Activated CD4-positive, alpha-beta T cell treated with anti-CD3 and anti-CD28 coated beads, Interleukin-2, amount 10 ng/mL, durations not matched to agents 24 days and 14 days (primary cell): ENCODE measurements at regions of chr4 and their contacts with region 1.

Region 1: GRCh38 chr4:93532234-93532633 is 296.3 kb upstream of the ATOH1 start:
- DNase-seq: no peak
- H3K4me3 Mint-ChIP-seq: no peak overlapping the region
- H3K27ac Mint-ChIP-seq: no peak overlapping the region
- H3K4me1 Mint-ChIP-seq: no peaks in the 10 kb centered on the region
- H3K27me3 Mint-ChIP-seq: no peaks in the 10 kb centered on the region

Region 2: GRCh38 chr4:93605163-93605562 is 72.9 kb after region 1 on chr4:
- intact Hi-C with region 1: loop called (anchors 2 kb)
- DNase-seq: no peak
- H3K4me3 Mint-ChIP-seq: no peak overlapping the region
- H3K27ac Mint-ChIP-seq: no peak overlapping the region
- H3K4me1 Mint-ChIP-seq: no peaks in the 10 kb centered on the region
- H3K27me3 Mint-ChIP-seq: no peaks in the 10 kb centered on the region